ENCODE measurements at regions of chr7 and their contacts with region 1.

Region 1: GRCh38 chr7:20591058-20591457 is 24.4 kb upstream of the ABCB5 start:
- DNase-seq: no peak
- ATAC-seq: no peak
- H3K4me3 ChIP-seq: no peak overlapping the region
- H3K27ac ChIP-seq: no peak overlapping the region
- H3K4me1 ChIP-seq: no peaks in the 10 kb centered on the region
- H3K27me3 ChIP-seq: no peaks in the 10 kb centered on the region
- CTCF ChIP-seq: no peak
- EP300 ChIP-seq: no peak
- POLR2A ChIP-seq: no peak
- RAD21 ChIP-seq: no peak

Region 2: GRCh38 chr7:19969859-19970498 is 621.1 kb before region 1 on chr7:
- CTCF ChIA-PET with region 1: no interaction called
- POLR2A ChIA-PET with region 1: interaction called, 12 read pairs
- RAD21 ChIA-PET with region 1: no interaction called
- SMC1A ChIA-PET with region 1: no interaction called
- in situ Hi-C with region 1: no loop called
- intact Hi-C with region 1: no loop called
- DNase-seq: no peak
- ATAC-seq: no peak
- H3K4me3 ChIP-seq: no peak overlapping the region
- H3K27ac ChIP-seq: no peak overlapping the region
- H3K4me1 ChIP-seq: no peaks in the 10 kb centered on the region
- H3K27me3 ChIP-seq: no peaks in the 10 kb centered on the region
- CTCF ChIP-seq: no peak
- EP300 ChIP-seq: no peak
- POLR2A ChIP-seq: no peak
- RAD21 ChIP-seq: no peak

Region 3: DNA sequence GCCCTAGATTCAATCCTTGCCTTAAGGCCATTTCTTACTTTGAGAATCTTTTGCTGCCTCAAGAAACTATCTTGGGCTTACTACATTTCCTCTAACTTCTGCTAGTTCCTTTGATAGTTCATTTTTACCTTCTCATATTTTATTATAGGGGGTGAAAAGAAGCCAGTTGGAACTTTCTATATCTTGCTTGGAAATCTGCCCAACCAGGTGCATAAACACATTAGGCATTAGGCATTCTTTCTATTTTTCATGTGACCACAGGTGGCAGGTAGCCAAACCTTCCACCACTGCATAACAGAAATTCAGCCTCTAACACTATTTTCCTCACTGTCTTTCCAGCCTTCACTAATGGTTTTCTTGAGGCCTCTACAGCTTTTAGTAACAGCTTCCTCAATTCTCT is 495.6 kb after region 1 on chr7:
- CTCF ChIA-PET with region 1: no interaction called
- POLR2A ChIA-PET with region 1: no interaction called
- RAD21 ChIA-PET with region 1: no interaction called
- SMC1A ChIA-PET with region 1: no interaction called
- in situ Hi-C with region 1: no loop called
- intact Hi-C with region 1: no loop called
- DNase-seq: no peak
- ATAC-seq: no peak
- H3K4me3 ChIP-seq: no peak overlapping the region
- H3K27ac ChIP-seq: no peak overlapping the region
- H3K4me1 ChIP-seq: no peaks in the 10 kb centered on the region
- H3K27me3 ChIP-seq: no peaks in the 10 kb centered on the region
- CTCF ChIP-seq: no peak
- EP300 ChIP-seq: no peak
- POLR2A ChIP-seq: no peak
- RAD21 ChIP-seq: no peak